Dorsolateral prefrontal cortex (tissue), 120 donors: ENCODE measurements at regions of chr15 and their contacts with region 1.

Region 1: DNA sequence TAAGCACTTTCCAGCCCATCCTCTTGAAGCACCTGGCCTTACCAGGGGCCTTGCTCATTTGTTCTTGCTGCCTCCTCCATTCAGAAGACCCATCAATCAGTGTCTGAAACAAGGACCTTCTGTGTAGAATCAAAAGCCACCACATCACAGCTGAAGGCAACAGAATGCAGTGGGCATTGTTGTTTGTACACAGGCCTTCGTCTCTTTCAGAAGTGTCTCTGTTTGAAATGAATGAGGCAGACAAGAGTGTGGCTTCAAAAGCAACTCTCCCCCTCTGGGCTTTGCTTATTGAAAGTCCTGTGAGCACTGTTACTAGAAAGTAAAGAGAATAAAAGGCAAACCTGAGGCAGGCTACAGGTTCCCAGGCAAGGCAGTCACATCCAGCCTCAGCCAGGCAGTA is 24.4 kb upstream of the LIPC start:
- DNase-seq: peak in 5 of 10 donors; percentile 16 to 74 (median 47)
- H3K4me3 ChIP-seq: peak overlapping the region in 2 of 59 donors; percentile 3 to 11
- H3K27ac ChIP-seq: peak overlapping the region in 39 of 59 donors; percentile 2 to 80 (median 53)
- H3K27me3 ChIP-seq: no peaks in the 10 kb centered on the region
- CTCF ChIP-seq: peak in 13 of 56 donors; percentile 11 to 54 (median 23)

Region 2: DNA sequence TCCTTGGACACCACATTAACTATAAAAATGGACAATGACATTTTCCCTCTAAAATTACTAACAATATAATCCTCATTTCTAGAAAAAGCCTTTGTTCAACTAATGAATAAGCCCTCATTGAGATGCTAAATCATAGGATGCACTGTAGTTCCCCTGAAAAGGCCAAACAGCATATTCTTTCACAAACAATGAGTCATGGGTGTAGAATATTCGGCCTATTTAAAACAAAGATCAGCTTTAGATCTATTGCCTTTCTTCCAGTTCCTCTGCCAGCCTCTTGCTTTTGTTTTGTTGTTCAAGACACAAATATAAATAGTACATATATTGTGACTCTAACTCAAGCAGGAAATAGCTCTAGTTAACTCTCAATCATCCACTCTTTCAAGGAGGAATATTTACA is 259.6 kb after region 1 on chr15:
- intact Hi-C with region 1: loop called in 1 of 2 experiments (anchors 5 kb)
- DNase-seq: no peak
- H3K4me3 ChIP-seq: peak overlapping the region in 7 of 59 donors; percentile 6 to 33 (median 14)
- H3K27ac ChIP-seq: peak overlapping the region; percentile 40 to 98 (median 91)
- H3K27me3 ChIP-seq: no peaks in the 10 kb centered on the region
- CTCF ChIP-seq: peak in 4 of 56 donors; percentile 2 to 34 (median 16)